PC-3 (cell line): ENCODE measurements at regions of chr21 and their contacts with region 1.

Region 1: GRCh38 chr21:14143999-14144398 is 66.8 kb downstream of the LIPI start:
- DNase-seq: no peak
- ATAC-seq: no peak
- H3K4me3 ChIP-seq: no peak overlapping the region
- H3K27ac ChIP-seq: no peak overlapping the region
- H3K4me1 ChIP-seq: no peaks in the 10 kb centered on the region
- H3K27me3 ChIP-seq: 0 out of 2 replicates have a peak, but pooled peaks cover 4% of the 10 kb centered on the region
- CTCF ChIP-seq: no peak

Region 2: DNA sequence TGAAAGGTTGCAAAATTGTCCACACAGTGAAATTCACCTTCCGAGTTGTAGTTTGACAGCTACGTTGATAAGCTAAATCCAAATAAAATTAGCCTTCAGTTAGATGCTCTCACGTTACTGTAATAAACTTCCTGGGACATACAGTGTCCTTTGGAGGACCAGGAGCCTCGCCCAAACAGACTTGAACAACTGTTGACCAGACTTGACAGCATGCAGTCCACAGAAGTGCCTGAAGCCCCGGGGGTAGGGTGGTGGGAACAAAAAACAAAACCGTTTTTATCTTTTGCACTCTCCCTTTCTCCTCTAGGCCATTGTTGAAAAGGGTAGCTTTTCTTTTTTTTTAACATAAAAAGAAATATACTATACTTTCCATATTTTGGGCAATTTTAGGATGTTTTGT is 575.0 kb after region 1 on chr21:
- CTCF ChIA-PET with region 1: no interaction called
- POLR2A ChIA-PET with region 1: interaction called, 13 read pairs
- intact Hi-C with region 1: no loop called
- DNase-seq: no peak
- ATAC-seq: no peak
- H3K4me3 ChIP-seq: no peak overlapping the region
- H3K27ac ChIP-seq: no peak overlapping the region
- H3K4me1 ChIP-seq: no peaks in the 10 kb centered on the region
- H3K27me3 ChIP-seq: peaks cover 5% of the 10 kb centered on the region; the same call in 1 of the 2 replicates
- CTCF ChIP-seq: no peak